ENCODE measurements at regions of chr7 and their contacts with region 1.

Region 1: DNA sequence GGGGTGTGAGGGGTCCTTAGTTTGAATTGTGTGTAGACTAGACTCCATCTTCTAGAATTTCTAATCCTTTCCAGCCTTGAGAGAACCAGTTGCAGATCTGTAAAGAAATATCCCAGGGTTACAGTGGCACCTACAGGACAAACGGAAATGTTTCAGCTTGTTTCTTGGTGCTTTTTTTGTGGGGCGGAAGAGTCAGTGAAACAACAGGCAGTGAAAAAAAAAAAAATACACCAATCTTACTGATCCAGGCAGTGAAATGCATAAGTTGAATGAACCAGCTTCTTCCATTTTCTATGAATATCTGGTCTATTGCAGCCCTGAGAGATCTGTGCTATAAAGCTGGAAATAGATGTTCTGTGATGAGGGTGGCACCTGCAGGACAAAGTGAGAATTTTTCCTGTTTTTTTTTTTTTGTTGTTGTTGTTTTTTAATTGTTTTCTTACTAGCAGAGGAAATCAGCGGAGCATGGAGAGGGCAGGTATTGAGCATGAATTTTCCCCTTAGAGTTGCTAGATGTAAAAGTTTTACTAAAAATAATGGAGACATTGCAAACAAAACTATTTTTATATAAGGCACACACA is 81.9 kb upstream of the DYNC1I1 start:
- DNase-seq: peak; percentile 10
- H3K4me3 ChIP-seq: no peak overlapping the region
- H3K27ac ChIP-seq: no peak overlapping the region
- H3K27me3 ChIP-seq: no peaks in the 10 kb centered on the region
- CTCF ChIP-seq: peak; percentile 58

Region 2: DNA sequence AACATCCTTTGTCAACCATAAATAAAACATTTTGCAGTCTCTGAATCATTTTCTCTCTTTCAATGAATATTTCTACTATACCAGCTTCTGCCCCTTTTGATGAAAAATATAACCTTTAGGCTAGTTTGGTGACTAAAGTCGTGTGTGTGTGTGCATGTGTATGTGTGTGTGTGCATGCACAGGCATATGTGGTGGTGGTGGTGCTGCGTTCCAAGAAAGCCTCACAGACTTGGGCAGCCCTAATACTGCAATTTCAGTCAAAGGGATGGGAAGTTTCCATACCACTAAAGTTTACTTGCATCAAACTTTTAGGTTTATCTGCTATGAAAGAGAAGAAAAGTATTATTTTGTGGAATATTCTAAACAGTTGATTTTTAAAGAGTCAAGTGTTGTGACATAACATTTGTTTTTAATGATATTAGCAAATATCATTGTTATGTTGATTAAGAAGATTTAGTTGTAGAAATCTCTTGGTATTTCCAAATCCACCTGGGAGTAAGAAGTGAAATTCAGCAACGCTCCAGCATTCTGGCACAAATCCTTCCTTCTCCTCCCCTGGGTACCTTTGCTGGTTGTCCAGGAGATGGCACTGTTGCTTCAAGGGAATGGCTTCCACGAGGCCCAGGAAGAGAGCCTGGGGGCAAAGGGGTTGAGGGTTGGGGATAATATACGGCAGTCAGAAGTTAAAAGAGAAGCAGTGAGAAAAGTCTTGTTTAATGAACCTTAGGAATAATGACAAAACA is 163.3 kb before region 1 on chr7:
- CTCF ChIA-PET with region 1: interaction called, 641 read pairs
- POLR2A ChIA-PET with region 1: no interaction called
- DNase-seq: no peak
- H3K4me3 ChIP-seq: no peak overlapping the region
- H3K27ac ChIP-seq: no peak overlapping the region
- H3K27me3 ChIP-seq: no peaks in the 10 kb centered on the region
- CTCF ChIP-seq: peak; percentile 90

Region 3: DNA sequence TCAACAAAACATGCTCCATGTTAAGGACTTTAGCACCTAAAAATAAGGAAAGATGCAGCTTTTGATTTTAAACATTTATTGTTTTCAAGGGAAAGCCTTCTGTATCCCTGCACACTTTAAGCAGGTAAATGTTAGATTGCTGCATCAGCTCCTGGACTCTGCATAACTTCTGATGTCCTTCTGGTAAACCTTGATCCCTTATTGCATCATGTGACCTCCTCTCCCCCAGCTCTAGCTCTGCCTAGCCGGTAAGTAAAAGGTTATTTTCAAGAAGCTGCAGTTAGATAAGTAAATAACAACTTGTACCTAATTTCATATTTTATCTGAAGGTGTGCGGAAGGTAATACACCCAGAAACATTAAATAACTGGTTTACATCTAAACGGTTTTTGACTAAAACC is 131.6 kb before region 1 on chr7:
- CTCF ChIA-PET with region 1: interaction called, 11 read pairs
- POLR2A ChIA-PET with region 1: no interaction called
- DNase-seq: no peak
- H3K4me3 ChIP-seq: no peak overlapping the region
- H3K27ac ChIP-seq: no peak overlapping the region
- H3K27me3 ChIP-seq: no peaks in the 10 kb centered on the region
- CTCF ChIP-seq: no peak

Region 4: GRCh38 chr7:95642173-95642572 is 48.3 kb before region 1 on chr7:
- CTCF ChIA-PET with region 1: interaction called, 12 read pairs
- POLR2A ChIA-PET with region 1: no interaction called
- DNase-seq: no peak
- H3K4me3 ChIP-seq: no peak overlapping the region
- H3K27ac ChIP-seq: no peak overlapping the region
- H3K27me3 ChIP-seq: no peaks in the 10 kb centered on the region
- CTCF ChIP-seq: no peak

Region 5: DNA sequence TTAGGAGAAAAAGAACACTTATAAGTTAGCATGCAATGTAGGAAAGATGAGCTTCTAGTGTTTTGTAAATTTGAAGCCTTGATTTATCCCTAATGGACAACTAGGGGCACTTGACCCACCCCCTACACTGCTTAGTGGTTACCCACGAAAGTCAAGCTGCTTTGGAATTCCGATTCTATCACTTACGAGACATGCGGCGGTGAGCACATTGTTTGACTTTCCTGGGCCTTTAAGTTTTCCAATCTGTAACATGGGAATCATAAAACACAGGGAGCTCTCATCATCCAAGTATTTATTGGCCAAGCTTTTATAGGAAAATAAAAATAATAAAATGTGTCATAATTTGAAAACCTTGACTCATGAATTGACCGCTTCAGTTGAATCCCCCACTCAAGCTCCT is 15.4 kb before region 1 on chr7:
- CTCF ChIA-PET with region 1: interaction called, 12 read pairs
- POLR2A ChIA-PET with region 1: no interaction called
- DNase-seq: no peak
- H3K4me3 ChIP-seq: no peak overlapping the region
- H3K27ac ChIP-seq: no peak overlapping the region
- H3K27me3 ChIP-seq: no peaks in the 10 kb centered on the region
- CTCF ChIP-seq: no peak